Heart left ventricle (tissue), 16 donors: ENCODE measurements at regions of chr11 and their contacts with region 1.

Region 1: DNA sequence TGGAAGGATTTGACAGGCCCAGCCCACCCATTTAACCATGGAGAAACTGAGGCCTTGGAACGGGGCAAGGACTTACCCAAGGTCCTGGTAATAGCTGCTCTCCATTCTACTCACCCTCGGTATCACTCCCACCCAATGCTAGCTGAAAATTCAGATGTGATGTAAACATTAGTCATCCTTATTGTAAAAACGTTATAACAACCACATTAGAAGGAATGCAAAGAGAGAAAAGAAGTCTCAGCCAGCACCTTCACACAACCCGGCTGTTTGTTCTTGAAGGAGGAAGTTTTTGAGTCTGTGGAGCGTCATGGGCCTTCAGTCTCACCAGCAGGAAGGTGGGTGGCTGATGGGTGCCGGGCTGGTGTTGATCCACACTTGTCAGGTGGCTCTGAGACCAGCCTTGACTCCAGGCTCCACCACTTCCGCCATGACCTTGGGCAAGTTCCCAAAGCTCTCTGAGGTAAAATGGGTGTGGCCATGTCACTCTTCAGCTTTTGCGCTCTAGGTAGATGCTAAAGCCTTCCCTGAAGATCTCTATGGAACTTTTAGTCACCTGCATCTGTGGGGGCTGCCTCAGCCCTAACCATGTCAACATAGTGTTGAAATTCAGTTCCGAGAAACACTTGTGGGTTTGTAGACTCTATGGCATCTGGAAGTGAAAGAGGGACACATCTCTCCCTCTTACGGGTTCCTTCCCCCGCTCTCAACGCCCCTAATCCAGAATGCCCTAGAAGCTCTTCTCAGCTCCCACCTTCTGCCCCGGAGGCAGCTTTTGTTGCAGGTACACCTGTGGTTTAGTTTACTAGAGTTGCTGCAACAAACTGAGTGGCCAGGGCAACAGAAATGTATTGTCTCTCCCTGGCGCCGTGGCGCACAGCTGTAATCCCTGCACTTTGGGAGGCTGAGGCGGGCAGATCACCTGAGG is 14.8 kb downstream of the CD6 start:
- DNase-seq: no peak
- ATAC-seq: no peak
- H3K4me3 ChIP-seq: peak overlapping the region in 1 of 12 donors; percentile 13
- H3K27ac ChIP-seq: peak overlapping the region in 1 of 12 donors; percentile 54
- H3K4me1 ChIP-seq: peaks cover 0 to 9% (median 0%) of the 10 kb centered on the region in 12 donors
- H3K27me3 ChIP-seq: peaks cover 0 to 12% (median 0%) of the 10 kb centered on the region in 9 donors
- CTCF ChIP-seq: no peak
- POLR2A ChIP-seq: no peak

Region 2: DNA sequence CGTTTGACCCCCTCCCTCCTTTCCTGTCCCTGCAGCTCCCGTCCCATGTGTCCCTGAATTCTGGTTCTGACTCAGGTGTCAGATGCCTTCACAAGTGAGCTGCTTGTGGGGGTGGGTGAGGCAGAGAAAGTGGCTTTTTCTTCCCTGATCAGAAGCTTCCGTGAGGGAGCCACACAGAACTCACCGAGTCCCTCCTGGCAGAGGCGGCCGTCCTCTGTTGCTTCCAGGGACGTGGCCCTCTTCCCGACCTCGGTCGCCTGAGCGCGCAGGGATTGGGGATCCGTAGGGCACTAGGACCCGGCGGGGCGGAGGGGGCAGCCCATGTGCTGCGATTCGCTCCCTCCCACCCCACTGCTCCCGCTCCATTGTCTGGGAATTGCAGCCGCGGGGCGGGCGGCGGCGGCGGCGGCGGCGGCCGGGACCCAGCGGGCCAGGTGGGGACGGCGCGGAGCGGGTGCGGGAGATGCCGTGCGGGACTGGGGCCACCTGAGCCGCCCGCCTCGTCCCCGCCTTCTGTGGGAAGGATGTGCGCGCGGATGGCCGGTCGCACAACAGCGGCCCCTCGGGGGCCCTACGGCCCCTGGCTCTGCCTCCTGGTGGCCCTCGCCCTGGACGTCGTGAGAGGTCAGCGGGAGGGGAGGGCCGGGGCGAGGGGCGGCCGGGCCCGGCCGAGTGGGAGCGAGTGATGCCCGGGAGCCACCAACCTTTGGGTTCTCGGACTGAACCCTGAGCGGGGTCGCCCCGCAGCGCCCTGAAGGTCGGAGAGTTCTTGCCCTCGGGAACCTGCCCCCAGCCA is 61.9 kb before region 1 on chr11 and contains the start of gene TMEM132A:
- intact Hi-C with region 1: no loop called
- DNase-seq: peak; percentile 73 to 84 (median 82)
- ATAC-seq: peak; percentile 72 to 90 (median 85)
- H3K4me3 ChIP-seq: peak within 1 kb of the TSS; percentile 34 to 88 (median 70)
- H3K27ac ChIP-seq: peak within 1 kb of the TSS in 8 of 12 donors; percentile 13 to 63 (median 45)
- H3K4me1 ChIP-seq: peaks cover 0 to 30% (median 17%) of the 10 kb centered on the region in 12 donors
- H3K27me3 ChIP-seq: peaks cover 0 to 35% (median 0%) of the 10 kb centered on the region in 9 donors
- CTCF ChIP-seq: peak in 1 of 12 donors; percentile 5
- POLR2A ChIP-seq: peak in 1 of 2 donors; percentile 45
- total RNA-seq, gene TMEM132A: 3.1 to 16.1 (median 8.5) TPM

Region 3: GRCh38 chr11:61056571-61056970 is 70.3 kb after region 1 on chr11:
- intact Hi-C with region 1: loop called in 1 of 10 experiments (anchors 5 kb)
- DNase-seq: no peak
- ATAC-seq: no peak
- H3K4me3 ChIP-seq: no peak overlapping the region
- H3K27ac ChIP-seq: no peak overlapping the region
- H3K4me1 ChIP-seq: peaks cover 0 to 13% (median 0%) of the 10 kb centered on the region in 12 donors
- H3K27me3 ChIP-seq: no peaks in the 10 kb centered on the region
- CTCF ChIP-seq: no peak
- POLR2A ChIP-seq: no peak